CD8-positive, alpha-beta T cell (primary cell): ENCODE measurements at regions of chr2 and their contacts with region 1.

Region 1: GRCh38 chr2:207769597-207770486 is at the start of gene FZD5:
- DNase-seq: peak; percentile 44 to 90 (median 74)
- ATAC-seq: peak; percentile 71
- H3K4me3 ChIP-seq: peak within 1 kb of the TSS; percentile 67 to 79
- H3K4me3 Mint-ChIP-seq: peak within 1 kb of the TSS; percentile 95
- H3K27ac ChIP-seq: no peak within 1 kb of the TSS
- H3K27ac Mint-ChIP-seq: no peak within 1 kb of the TSS
- H3K4me1 ChIP-seq: peaks cover 36% of the 10 kb centered on the region
- H3K4me1 Mint-ChIP-seq: peaks cover 33% of the 10 kb centered on the region
- H3K27me3 ChIP-seq: peaks cover 4 to 5% of the 10 kb centered on the region in 2 experiments
- H3K27me3 Mint-ChIP-seq: peaks cover 22% of the 10 kb centered on the region
- CTCF ChIP-seq: no peak
- total RNA-seq, gene FZD5: 0.39 to 0.54 TPM

Region 2: DNA sequence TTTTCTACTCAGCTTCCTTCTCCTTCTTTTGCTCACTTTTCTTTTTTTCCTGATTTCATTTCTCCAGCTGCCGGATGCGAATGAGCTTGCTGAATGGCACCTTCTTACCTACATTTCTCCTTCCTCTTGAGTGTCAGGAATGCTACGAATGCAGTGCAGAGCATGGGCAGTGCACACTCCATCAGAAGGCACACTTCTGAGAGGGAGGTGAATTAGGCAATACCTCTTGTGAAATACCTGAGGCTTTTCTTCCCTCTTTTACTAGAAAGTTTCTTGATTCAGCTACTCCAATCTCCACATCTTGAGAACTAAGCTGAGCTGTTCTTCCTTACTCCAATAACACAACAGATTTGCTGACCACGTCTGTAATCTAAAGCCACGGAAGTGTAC is 204.4 kb after region 1 on chr2:
- CTCF ChIA-PET with region 1: interaction called, 6 read pairs
- POLR2A ChIA-PET with region 1: no interaction called
- intact Hi-C with region 1: loop called in 1 of 2 experiments (anchors 5 kb)
- DNase-seq: no peak
- ATAC-seq: no peak
- H3K4me3 ChIP-seq: no peak overlapping the region
- H3K4me3 Mint-ChIP-seq: no peak overlapping the region
- H3K27ac ChIP-seq: no peak overlapping the region
- H3K27ac Mint-ChIP-seq: no peak overlapping the region
- H3K4me1 ChIP-seq: peaks cover 4% of the 10 kb centered on the region
- H3K4me1 Mint-ChIP-seq: peaks cover 26% of the 10 kb centered on the region
- H3K27me3 ChIP-seq: no peaks in the 10 kb centered on the region
- H3K27me3 Mint-ChIP-seq: no peaks in the 10 kb centered on the region
- CTCF ChIP-seq: no peak

Region 3: DNA sequence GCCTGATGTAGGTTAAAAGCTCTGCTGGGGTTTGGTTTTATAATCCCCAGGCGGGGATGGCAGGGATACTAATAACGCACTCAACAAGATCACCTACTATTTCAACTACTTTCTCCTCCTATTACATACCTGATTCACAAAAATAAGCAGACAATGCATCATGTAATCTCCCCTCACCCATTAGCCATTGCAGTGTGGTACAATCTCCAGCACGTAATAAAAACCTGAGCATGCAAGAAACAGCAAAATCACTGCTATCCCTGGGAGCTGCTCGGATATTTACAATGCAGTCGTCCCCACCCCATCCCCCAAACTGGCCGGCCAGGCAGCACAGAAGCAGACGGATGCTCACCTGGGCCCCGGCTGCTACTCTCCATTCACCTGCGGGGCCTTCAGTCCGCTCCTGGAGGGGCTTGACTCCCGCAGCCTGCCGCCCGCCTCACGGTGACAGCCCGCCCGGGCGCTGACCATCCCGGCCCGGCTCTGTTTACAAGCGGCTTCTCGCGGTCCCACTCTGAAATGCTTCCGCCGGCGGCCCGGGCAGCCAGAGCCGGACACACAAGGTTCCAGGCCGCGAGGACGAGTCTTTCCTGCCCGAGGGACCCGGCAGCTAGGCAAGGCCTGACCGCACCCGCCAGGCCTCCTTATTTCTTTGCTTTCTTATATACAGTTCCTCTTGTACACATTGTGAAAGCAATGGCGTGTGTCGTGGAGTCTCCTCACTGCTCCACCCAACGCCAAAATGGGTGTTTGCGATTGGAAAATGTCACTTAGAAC is 255.4 kb after region 1 on chr2 and contains the start of gene PLEKHM3:
- CTCF ChIA-PET with region 1: no interaction called
- POLR2A ChIA-PET with region 1: no interaction called
- intact Hi-C with region 1: loop called in 1 of 2 experiments (anchors 5 kb)
- DNase-seq: peak; percentile 53 to 90 (median 71)
- ATAC-seq: peak; percentile 76
- H3K4me3 ChIP-seq: peak within 1 kb of the TSS; percentile 79 to 80
- H3K4me3 Mint-ChIP-seq: peak within 1 kb of the TSS; percentile 98
- H3K27ac ChIP-seq: peak within 1 kb of the TSS; percentile 64 to 67
- H3K27ac Mint-ChIP-seq: peak within 1 kb of the TSS; percentile 95
- H3K4me1 ChIP-seq: peaks cover 6% of the 10 kb centered on the region
- H3K4me1 Mint-ChIP-seq: peaks cover 30% of the 10 kb centered on the region
- H3K27me3 ChIP-seq: no peaks in the 10 kb centered on the region
- H3K27me3 Mint-ChIP-seq: no peaks in the 10 kb centered on the region
- CTCF ChIP-seq: no peak
- total RNA-seq, gene PLEKHM3: 10.9 to 11.3 TPM